ENCODE measurements at regions of chr7 and their contacts with region 1.

Region 1: GRCh38 chr7:43869006-43869866 is at the start of gene MRPS24:
- DNase-seq: peak; percentile 91 to 97 (median 95)
- ATAC-seq: peak; percentile 100
- H3K4me3 ChIP-seq: peak within 1 kb of the TSS; percentile 69 to 76
- H3K4me3 Mint-ChIP-seq: peak within 1 kb of the TSS; percentile 94
- H3K27ac ChIP-seq: peak within 1 kb of the TSS; percentile 50 to 69
- H3K27ac Mint-ChIP-seq: peak within 1 kb of the TSS; percentile 93
- H3K4me1 ChIP-seq: peaks cover 14% of the 10 kb centered on the region
- H3K4me1 Mint-ChIP-seq: peaks cover 23% of the 10 kb centered on the region
- H3K27me3 ChIP-seq: no peaks in the 10 kb centered on the region
- H3K27me3 Mint-ChIP-seq: no peaks in the 10 kb centered on the region
- CTCF ChIP-seq: no peak
- total RNA-seq, gene MRPS24: 61.7 to 74.4 TPM

Region 2: GRCh38 chr7:43729214-43729923 is 139.9 kb before region 1 on chr7 and contains the start of gene COA1:
- CTCF ChIA-PET with region 1: no interaction called
- POLR2A ChIA-PET with region 1: no interaction called
- intact Hi-C with region 1: loop called in 1 of 2 experiments (anchors 1 kb)
- DNase-seq: peak; percentile 61 to 93 (median 81)
- ATAC-seq: peak; percentile 92
- H3K4me3 ChIP-seq: peak within 1 kb of the TSS; percentile 81 to 89
- H3K4me3 Mint-ChIP-seq: peak within 1 kb of the TSS; percentile 93
- H3K27ac ChIP-seq: peak within 1 kb of the TSS; percentile 70 to 74
- H3K27ac Mint-ChIP-seq: peak within 1 kb of the TSS; percentile 90
- H3K4me1 ChIP-seq: peaks cover 31% of the 10 kb centered on the region
- H3K4me1 Mint-ChIP-seq: peaks cover 42% of the 10 kb centered on the region
- H3K27me3 ChIP-seq: no peaks in the 10 kb centered on the region
- H3K27me3 Mint-ChIP-seq: no peaks in the 10 kb centered on the region
- CTCF ChIP-seq: no peak
- total RNA-seq, gene COA1: 95.8 to 96.7 TPM

Region 3: GRCh38 chr7:43758029-43758821 is 111.0 kb before region 1 on chr7 and contains the start of gene BLVRA:
- CTCF ChIA-PET with region 1: no interaction called
- POLR2A ChIA-PET with region 1: no interaction called
- intact Hi-C with region 1: loop called in 1 of 2 experiments (anchors 1 kb)
- DNase-seq: peak; percentile 30 to 76 (median 63)
- ATAC-seq: peak; percentile 72
- H3K4me3 ChIP-seq: peak within 1 kb of the TSS; percentile 62 to 90
- H3K4me3 Mint-ChIP-seq: peak within 1 kb of the TSS; percentile 90
- H3K27ac ChIP-seq: peak within 1 kb of the TSS; percentile 18 to 74
- H3K27ac Mint-ChIP-seq: peak within 1 kb of the TSS; percentile 80
- H3K4me1 ChIP-seq: peaks cover 15% of the 10 kb centered on the region
- H3K4me1 Mint-ChIP-seq: peaks cover 27% of the 10 kb centered on the region
- H3K27me3 ChIP-seq: no peaks in the 10 kb centered on the region
- H3K27me3 Mint-ChIP-seq: no peaks in the 10 kb centered on the region
- CTCF ChIP-seq: no peak
- total RNA-seq, gene BLVRA: 12.8 to 14.6 TPM

Region 4: GRCh38 chr7:43784030-43785001 is 84.9 kb before region 1 on chr7:
- CTCF ChIA-PET with region 1: no interaction called
- POLR2A ChIA-PET with region 1: no interaction called
- intact Hi-C with region 1: no loop called
- DNase-seq: peak in 2 of 9 experiments; percentile 23 to 27
- ATAC-seq: no peak
- H3K4me3 ChIP-seq: no peak overlapping the region
- H3K4me3 Mint-ChIP-seq: no peak overlapping the region
- H3K27ac ChIP-seq: no peak overlapping the region
- H3K27ac Mint-ChIP-seq: no peak overlapping the region
- H3K4me1 ChIP-seq: no peaks in the 10 kb centered on the region
- H3K4me1 Mint-ChIP-seq: peaks cover 3% of the 10 kb centered on the region
- H3K27me3 ChIP-seq: no peaks in the 10 kb centered on the region
- H3K27me3 Mint-ChIP-seq: no peaks in the 10 kb centered on the region
- CTCF ChIP-seq: no peak

Region 5: GRCh38 chr7:43906331-43907010 is 37.2 kb after region 1 on chr7 and contains the start of gene URGCP:
- CTCF ChIA-PET with region 1: no interaction called
- POLR2A ChIA-PET with region 1: interaction called, 6 read pairs
- intact Hi-C with region 1: loop called (anchors 1 to 2 kb)
- DNase-seq: peak; percentile 10 to 74 (median 55)
- ATAC-seq: peak; percentile 91
- H3K4me3 ChIP-seq: peak within 1 kb of the TSS; percentile 60 to 70
- H3K4me3 Mint-ChIP-seq: peak within 1 kb of the TSS; percentile 94
- H3K27ac ChIP-seq: peak within 1 kb of the TSS; percentile 42 to 47
- H3K27ac Mint-ChIP-seq: peak within 1 kb of the TSS; percentile 96
- H3K4me1 ChIP-seq: peaks cover 26% of the 10 kb centered on the region
- H3K4me1 Mint-ChIP-seq: peaks cover 41% of the 10 kb centered on the region
- H3K27me3 ChIP-seq: no peaks in the 10 kb centered on the region
- H3K27me3 Mint-ChIP-seq: no peaks in the 10 kb centered on the region
- CTCF ChIP-seq: no peak
- total RNA-seq, gene URGCP: 24.5 to 25.0 TPM

Measured in CD8-positive, alpha-beta T cell (primary cell).